ENCODE measurements at regions of chr20 and their contacts with region 1.

Region 1: DNA sequence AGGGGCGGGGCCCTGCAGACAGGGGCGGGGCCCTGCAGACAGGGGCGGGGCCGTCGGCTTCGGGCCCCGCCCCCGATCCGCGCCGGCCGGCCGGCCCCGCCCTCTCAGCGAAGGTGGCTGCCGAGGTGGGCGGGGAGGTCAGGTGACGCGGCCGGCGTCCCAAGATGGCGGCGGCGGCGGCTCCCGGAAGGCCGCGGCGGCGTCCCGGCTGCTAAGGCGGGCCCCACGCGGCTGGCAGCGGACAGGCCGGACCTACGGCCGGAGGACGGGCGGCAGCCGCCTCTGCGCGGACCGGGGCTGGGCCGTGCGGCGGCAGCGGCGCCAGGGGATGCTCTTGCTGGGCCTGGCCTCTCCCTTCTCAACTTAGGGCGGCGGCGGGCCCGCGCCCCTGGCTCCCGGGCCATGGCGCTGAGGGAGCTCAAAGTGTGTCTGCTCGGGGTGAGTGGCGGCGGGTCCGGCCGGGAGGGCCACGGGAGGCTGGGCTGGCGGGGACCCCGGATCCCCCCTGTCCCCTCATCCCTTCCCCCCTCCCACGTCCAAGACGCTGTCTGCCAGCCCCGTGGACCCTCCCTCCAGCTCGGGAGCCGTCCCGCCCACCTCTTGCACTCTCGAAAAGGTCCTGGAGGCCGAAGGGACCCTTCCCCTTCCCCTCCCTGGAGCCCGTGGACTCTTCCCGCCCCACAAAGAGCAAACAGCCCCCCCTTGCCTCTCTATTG is at the start of gene RAB22A:
- DNase-seq: peak; percentile 39
- ATAC-seq: peak; percentile 86
- H3K4me3 ChIP-seq: peak within 1 kb of the TSS; percentile 90 to 94
- H3K27ac ChIP-seq: peak within 1 kb of the TSS; percentile 85
- H3K4me1 ChIP-seq: peaks cover 9 to 26% of the 10 kb centered on the region in 2 experiments; a peak in 3 of 4 replicates
- H3K27me3 ChIP-seq: no peaks in the 10 kb centered on the region
- CTCF ChIP-seq: no peak
- POLR2A ChIP-seq: peak; percentile 63
- RAD21 ChIP-seq: no peak
- total RNA-seq, gene RAB22A: 9.9 TPM

Region 2: GRCh38 chr20:58388882-58389323 is 79.2 kb after region 1 on chr20 and contains the start of gene VAPB:
- CTCF ChIA-PET with region 1: no interaction called
- POLR2A ChIA-PET with region 1: no interaction called
- RAD21 ChIA-PET with region 1: no interaction called
- intact Hi-C with region 1: loop called (anchors 2 kb)
- DNase-seq: peak; percentile 91
- ATAC-seq: peak; percentile 99
- H3K4me3 ChIP-seq: peak within 1 kb of the TSS; percentile 88 to 92
- H3K27ac ChIP-seq: peak within 1 kb of the TSS; percentile 79
- H3K4me1 ChIP-seq: peaks cover 14 to 15% of the 10 kb centered on the region in 2 experiments
- H3K27me3 ChIP-seq: no peaks in the 10 kb centered on the region
- CTCF ChIP-seq: no peak
- POLR2A ChIP-seq: no peak
- RAD21 ChIP-seq: no peak
- total RNA-seq, gene VAPB: 51.1 TPM

Region 3: DNA sequence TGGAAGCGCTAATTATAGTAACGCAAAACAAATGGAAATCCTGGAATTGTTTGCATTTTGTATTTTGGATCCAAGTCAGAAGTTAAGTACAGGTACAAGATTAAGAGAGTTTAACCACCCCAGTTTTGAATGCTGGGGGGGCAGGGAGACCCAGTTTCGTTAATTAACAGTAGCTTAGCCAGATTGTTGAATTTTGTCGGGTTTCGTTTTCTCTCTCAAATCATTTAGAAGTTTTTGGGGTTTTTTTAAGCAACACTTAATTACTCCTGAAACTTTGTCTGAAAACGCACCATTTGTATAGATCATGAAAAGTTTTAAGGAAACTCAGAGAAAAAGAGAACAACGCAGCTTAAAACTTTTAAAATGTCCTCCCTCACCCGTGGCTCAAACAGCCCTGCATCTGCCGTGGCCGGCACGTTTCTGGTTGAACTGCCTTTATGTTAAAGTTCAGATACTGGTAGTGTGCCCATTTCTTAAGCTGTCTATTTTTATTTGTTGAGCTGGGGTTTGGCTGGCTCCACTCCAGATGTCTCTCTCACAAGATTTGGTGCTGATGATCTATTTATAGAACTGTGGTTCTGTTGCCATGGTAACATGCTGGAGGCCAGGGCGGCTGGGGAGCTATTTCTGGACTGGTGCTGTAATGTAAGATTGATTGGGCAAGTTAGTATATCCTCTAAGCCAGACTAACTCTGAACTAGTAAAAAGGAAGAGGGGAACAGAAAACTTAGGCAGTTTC is 597.8 kb after region 1 on chr20:
- CTCF ChIA-PET with region 1: no interaction called
- POLR2A ChIA-PET with region 1: no interaction called
- RAD21 ChIA-PET with region 1: no interaction called
- intact Hi-C with region 1: no loop called
- DNase-seq: no peak
- ATAC-seq: peak; percentile 42; the same call in 1 of the 2 replicates
- H3K4me3 ChIP-seq: no peak overlapping the region
- H3K27ac ChIP-seq: peak overlapping the region; percentile 29; the same call in 1 of the 2 replicates
- H3K4me1 ChIP-seq: peaks cover 18 to 20% of the 10 kb centered on the region in 2 experiments
- H3K27me3 ChIP-seq: no peaks in the 10 kb centered on the region
- CTCF ChIP-seq: no peak
- POLR2A ChIP-seq: no peak
- RAD21 ChIP-seq: no peak